Activated CD4-positive, alpha-beta memory T cell treated with anti-CD3 and anti-CD28 coated beads for 36 hours (primary cell): ENCODE measurements at regions of chr2 and their contacts with region 1.

Region 1: DNA sequence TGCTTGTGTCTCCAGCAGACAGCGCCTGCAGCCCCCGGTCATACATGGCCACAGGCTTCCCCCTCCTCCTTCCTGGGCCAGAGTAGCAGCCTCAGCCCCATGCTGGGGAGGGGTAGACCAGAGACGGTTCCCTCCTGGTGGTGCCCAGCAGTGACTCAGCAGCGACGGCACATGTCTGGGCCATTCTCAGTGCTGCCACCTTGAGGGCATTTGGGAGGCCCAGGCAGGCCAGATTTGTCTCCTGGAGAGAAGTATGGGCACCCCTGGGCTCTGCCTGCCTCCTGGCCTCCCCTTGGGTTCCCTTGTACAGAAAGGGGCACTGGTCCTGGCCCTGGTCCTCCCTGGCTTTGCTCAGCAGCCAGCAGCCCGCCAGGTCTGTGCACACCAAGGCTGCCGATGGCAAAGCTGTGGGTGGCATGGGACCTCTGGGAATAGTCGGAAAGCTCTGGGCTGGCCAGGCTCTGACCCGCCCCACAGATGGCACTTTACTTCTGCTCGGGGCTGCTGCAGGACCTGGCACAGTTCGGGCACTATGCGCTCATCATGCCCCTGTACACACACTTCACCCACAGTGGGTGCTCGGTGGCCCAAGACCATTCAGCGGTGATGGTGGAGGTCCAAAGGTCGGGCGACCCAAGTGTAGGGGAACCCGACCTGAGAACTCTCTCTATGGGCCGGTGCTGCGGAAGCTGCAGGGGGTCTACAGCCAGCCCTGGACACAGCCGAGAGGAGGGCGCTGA is 11.4 kb upstream of the ALPI start:
- DNase-seq: peak; percentile 81
- H3K4me3 Mint-ChIP-seq: no peak overlapping the region
- H3K27ac Mint-ChIP-seq: no peak overlapping the region
- H3K4me1 Mint-ChIP-seq: no peaks in the 10 kb centered on the region
- H3K27me3 Mint-ChIP-seq: no peaks in the 10 kb centered on the region

Region 2: GRCh38 chr2:232473467-232473890 is 28.9 kb after region 1 on chr2:
- CTCF ChIA-PET with region 1: interaction called, 13 read pairs
- POLR2A ChIA-PET with region 1: no interaction called
- intact Hi-C with region 1: no loop called
- DNase-seq: no peak
- H3K4me3 Mint-ChIP-seq: no peak overlapping the region
- H3K27ac Mint-ChIP-seq: no peak overlapping the region
- H3K4me1 Mint-ChIP-seq: no peaks in the 10 kb centered on the region
- H3K27me3 Mint-ChIP-seq: peaks cover 24% of the 10 kb centered on the region

Region 3: DNA sequence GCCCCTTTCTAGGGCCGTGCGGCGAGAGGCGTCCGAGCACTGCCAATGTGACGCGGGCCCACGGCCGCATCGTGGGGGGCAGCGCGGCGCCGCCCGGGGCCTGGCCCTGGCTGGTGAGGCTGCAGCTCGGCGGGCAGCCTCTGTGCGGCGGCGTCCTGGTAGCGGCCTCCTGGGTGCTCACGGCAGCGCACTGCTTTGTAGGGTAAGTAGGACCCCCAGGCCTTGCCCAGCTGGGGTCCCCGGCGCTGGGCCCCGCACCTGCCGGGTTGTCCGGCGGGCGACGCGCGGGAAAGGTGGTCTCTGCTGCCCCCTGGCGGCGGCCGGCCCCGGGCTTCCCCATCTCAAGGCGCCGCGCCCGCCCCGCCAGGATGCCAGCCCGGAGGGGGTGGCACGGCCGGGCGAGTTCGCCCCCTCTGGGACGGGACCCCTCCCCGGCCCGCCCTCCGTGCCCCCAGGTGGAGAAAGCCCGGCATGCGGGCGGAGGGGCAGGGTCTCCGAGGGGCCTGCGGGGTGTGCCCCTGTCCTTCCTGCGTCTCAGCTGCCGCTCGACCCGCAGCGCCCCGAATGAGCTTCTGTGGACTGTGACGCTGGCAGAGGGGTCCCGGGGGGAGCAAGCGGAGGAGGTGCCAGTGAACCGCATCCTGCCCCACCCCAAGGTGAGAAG is 77.5 kb after region 1 on chr2:
- CTCF ChIA-PET with region 1: interaction called, 19 read pairs
- POLR2A ChIA-PET with region 1: no interaction called
- intact Hi-C with region 1: loop called (anchors 1 kb)
- DNase-seq: peak; percentile 68
- H3K4me3 Mint-ChIP-seq: no peak overlapping the region
- H3K27ac Mint-ChIP-seq: no peak overlapping the region
- H3K4me1 Mint-ChIP-seq: peaks cover 10% of the 10 kb centered on the region
- H3K27me3 Mint-ChIP-seq: peaks cover 38% of the 10 kb centered on the region